Activated CD8-positive, alpha-beta memory T cell treated with anti-CD3 and anti-CD28 coated beads, Interleukin-2, amount 10 ng/mL, durations not matched to agents 7 days and 5 days (primary cell): ENCODE measurements at regions of chr16 and their contacts with region 1.

Region 1: GRCh38 chr16:20383106-20384029 is 21.2 kb downstream of the PDILT start:
- DNase-seq: peak; percentile 65
- ATAC-seq: peak; percentile 80
- H3K4me3 Mint-ChIP-seq: no peak overlapping the region
- H3K27ac Mint-ChIP-seq: no peak overlapping the region
- H3K4me1 Mint-ChIP-seq: no peaks in the 10 kb centered on the region
- H3K27me3 Mint-ChIP-seq: peaks cover 6% of the 10 kb centered on the region

Region 2: GRCh38 chr16:19907161-19907992 is 476.0 kb before region 1 on chr16:
- CTCF ChIA-PET with region 1: interaction called, 69 read pairs
- DNase-seq: peak; percentile 77
- ATAC-seq: peak; percentile 91
- H3K4me3 Mint-ChIP-seq: no peak overlapping the region
- H3K27ac Mint-ChIP-seq: no peak overlapping the region
- H3K4me1 Mint-ChIP-seq: peaks cover 2% of the 10 kb centered on the region
- H3K27me3 Mint-ChIP-seq: peaks cover 13% of the 10 kb centered on the region

Region 3: GRCh38 chr16:20300312-20301097 is 82.9 kb before region 1 on chr16:
- CTCF ChIA-PET with region 1: interaction called, 19 read pairs
- DNase-seq: peak; percentile 57
- ATAC-seq: peak; percentile 63
- H3K4me3 Mint-ChIP-seq: no peak overlapping the region
- H3K27ac Mint-ChIP-seq: no peak overlapping the region
- H3K4me1 Mint-ChIP-seq: no peaks in the 10 kb centered on the region
- H3K27me3 Mint-ChIP-seq: no peaks in the 10 kb centered on the region

Region 4: DNA sequence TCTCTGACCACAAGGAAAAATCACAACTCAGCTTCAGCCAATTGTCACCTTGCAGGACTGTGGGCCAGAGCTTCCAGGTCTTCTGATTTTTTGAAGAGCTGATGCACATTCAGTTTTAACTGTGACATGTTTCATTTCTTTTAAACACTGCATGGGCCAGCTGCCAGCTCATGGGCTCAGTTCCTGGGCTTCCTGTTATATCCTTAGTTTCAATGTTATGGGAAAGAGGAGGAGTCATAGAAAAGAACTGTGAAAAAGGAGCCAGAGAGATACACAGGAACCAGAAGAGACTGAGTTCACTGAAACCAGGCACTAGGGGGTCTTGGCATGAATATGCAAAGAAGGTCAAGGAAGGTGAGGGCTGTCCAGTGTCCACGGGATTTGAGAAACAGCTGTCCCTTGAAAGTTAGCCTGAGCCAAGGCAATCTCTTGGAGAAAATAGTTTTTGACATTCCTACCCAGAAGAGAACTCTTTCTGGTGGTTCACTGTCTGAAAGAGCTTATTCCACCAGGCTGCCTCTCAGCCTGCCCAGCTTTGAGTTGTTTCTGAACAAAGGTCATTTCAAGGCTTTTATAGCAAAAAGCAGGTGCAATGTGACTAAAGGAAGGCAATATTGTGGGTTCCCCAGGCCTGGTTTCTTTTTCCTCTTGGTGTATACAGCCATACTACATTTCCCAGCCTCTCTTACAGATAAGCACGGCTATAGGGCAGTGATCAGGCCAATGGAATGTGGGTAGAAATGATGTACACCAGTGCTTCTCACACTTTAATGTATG is 10.6 kb after region 1 on chr16:
- CTCF ChIA-PET with region 1: interaction called, 27 read pairs
- DNase-seq: no peak
- ATAC-seq: no peak
- H3K4me3 Mint-ChIP-seq: no peak overlapping the region
- H3K27ac Mint-ChIP-seq: no peak overlapping the region
- H3K4me1 Mint-ChIP-seq: no peaks in the 10 kb centered on the region
- H3K27me3 Mint-ChIP-seq: no peaks in the 10 kb centered on the region

Region 5: GRCh38 chr16:20401475-20402016 is 18.2 kb after region 1 on chr16:
- CTCF ChIA-PET with region 1: interaction called, 18 read pairs
- DNase-seq: no peak
- ATAC-seq: no peak
- H3K4me3 Mint-ChIP-seq: no peak overlapping the region
- H3K27ac Mint-ChIP-seq: no peak overlapping the region
- H3K4me1 Mint-ChIP-seq: no peaks in the 10 kb centered on the region
- H3K27me3 Mint-ChIP-seq: no peaks in the 10 kb centered on the region